HAP-1 (cell line): ENCODE measurements at regions of chr3 and their contacts with region 1.

Region 1: DNA sequence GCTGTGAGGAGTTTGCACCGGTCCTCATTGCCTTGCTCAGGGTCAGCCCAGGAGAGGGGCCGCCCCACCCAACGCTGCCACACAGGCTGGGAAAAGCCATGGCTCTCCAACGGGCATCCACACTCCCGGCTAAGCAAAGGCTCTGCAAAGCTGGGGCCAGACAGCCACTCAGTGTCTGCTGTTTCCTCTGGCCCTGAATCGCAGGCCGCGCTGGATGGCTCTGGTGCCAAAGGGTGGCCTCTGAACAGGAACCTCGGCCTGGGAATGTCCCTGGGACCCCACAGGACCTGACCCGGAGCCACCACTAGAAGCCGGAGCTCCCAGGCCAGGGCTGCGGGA is 42.9 kb downstream of the RPN1 start:
- DNase-seq: no peak
- H3K4me3 ChIP-seq: no peak overlapping the region; the same call in 1 of the 2 replicates
- H3K4me1 ChIP-seq: peaks cover 7% of the 10 kb centered on the region; the same call in 1 of the 2 replicates
- H3K27me3 ChIP-seq: no peaks in the 10 kb centered on the region

Region 2: GRCh38 chr3:128236657-128237056 is 371.0 kb before region 1 on chr3:
- in situ Hi-C with region 1: loop called (anchors 10 kb)
- DNase-seq: no peak
- H3K4me3 ChIP-seq: no peak overlapping the region
- H3K4me1 ChIP-seq: peaks cover 3% of the 10 kb centered on the region
- H3K27me3 ChIP-seq: no peaks in the 10 kb centered on the region

Region 3: DNA sequence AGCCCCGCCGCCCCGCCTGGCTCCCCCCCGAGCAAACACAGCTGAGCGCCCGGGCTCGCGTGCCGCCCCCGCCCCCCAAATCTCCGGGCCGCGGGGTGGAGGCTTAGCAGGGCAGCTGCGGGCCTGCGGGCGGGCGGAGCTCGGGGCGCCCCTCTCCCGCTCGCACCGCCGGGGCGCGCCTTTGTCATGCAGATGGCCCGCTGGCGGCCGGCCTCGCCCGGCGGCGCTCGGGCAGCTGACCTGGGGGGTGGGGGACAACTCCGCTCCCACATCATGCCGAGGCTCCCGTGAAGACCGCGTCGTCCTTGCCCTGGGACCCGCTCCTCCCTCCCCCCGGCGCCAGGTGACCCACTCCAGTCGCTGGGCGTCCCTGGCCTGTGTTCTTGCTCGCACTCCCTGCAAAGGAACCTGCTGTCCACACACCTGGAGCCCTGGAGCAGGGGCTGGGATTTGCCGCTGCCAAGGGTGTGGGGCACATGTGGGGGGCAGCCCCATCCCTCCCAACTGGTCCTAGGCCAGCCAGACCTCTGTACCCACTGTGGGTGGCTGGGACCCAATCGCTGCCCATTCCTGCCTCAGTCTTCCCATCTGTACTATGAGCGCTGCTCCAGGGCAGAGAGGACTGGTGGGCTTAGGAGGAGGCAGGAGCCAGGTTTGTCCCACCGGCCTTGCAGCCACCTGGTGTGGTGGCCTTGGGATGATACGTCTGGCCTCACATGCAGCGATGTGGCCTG is 174.5 kb before region 1 on chr3:
- in situ Hi-C with region 1: loop called (anchors 5 kb)
- DNase-seq: peak; percentile 45 to 79
- H3K4me3 ChIP-seq: peak overlapping the region; percentile 19
- H3K4me1 ChIP-seq: peaks cover 12% of the 10 kb centered on the region
- H3K27me3 ChIP-seq: no peaks in the 10 kb centered on the region

Region 4: GRCh38 chr3:128487813-128488635 is 119.7 kb before region 1 on chr3:
- in situ Hi-C with region 1: loop called (anchors 5 kb)
- DNase-seq: peak; percentile 87 to 95
- H3K4me3 ChIP-seq: peak overlapping the region; percentile 77
- H3K4me1 ChIP-seq: peaks cover 42% of the 10 kb centered on the region
- H3K27me3 ChIP-seq: no peaks in the 10 kb centered on the region

Region 5: DNA sequence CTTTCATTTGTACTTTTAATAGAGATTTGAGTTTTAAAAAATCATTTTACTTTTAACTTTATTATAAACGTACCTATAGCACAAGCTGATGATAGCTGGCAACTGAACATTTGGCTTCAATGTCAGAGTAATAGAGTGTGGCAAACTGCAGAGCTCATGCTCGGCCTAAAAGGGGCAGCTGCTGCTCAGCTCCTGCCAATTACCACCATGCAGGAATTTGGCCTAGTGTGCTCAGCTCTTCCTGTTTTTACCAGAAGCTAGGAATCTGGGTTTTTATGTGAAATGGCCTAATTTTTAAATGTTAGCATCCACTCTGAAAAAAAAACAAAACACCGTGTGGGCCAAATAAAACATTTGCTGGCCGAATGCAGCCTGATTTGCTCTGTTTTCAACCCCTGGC is 834.1 kb after region 1 on chr3:
- in situ Hi-C with region 1: no loop called
- DNase-seq: no peak
- H3K4me3 ChIP-seq: no peak overlapping the region
- H3K4me1 ChIP-seq: peaks cover 11% of the 10 kb centered on the region
- H3K27me3 ChIP-seq: no peaks in the 10 kb centered on the region